CD4-positive, alpha-beta T cell (primary cell): ENCODE measurements at regions of chr10 and their contacts with region 1.

Region 1: GRCh38 chr10:106111246-106111645 is 1053.3 kb downstream of the SORCS1 start:
- DNase-seq: no peak
- ATAC-seq: no peak
- H3K4me3 ChIP-seq: no peak overlapping the region
- H3K4me3 Mint-ChIP-seq: no peak overlapping the region
- H3K27ac ChIP-seq: no peak overlapping the region
- H3K27ac Mint-ChIP-seq: no peak overlapping the region
- H3K4me1 ChIP-seq: no peaks in the 10 kb centered on the region
- H3K4me1 Mint-ChIP-seq: no peaks in the 10 kb centered on the region
- H3K27me3 ChIP-seq: no peaks in the 10 kb centered on the region
- H3K27me3 Mint-ChIP-seq: no peaks in the 10 kb centered on the region
- CTCF ChIP-seq: no peak

Region 2: DNA sequence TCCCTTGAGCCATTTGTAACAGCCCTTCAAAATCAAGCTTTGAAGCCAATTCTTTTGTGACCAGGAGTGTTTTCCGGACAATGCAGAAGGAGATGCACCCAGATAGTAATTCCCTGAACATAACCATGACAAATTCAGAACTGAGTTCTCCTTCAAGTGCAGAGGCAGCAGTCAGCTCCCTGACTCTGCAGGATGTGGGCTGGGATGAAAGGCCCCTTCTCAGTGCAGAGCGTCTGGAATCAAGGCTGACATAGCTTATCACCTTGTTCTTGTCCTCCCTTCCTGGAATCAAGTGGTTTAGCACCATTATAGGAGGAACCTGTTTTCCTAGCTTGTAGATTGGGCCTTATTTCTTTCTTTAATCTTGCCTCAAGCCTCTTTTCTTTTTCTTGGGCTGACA is 1326.8 kb before region 1 on chr10:
- CTCF ChIA-PET with region 1: no interaction called
- POLR2A ChIA-PET with region 1: no interaction called
- intact Hi-C with region 1: loop called in 1 of 2 experiments (anchors 10 kb)
- DNase-seq: no peak
- ATAC-seq: no peak
- H3K4me3 ChIP-seq: no peak overlapping the region
- H3K4me3 Mint-ChIP-seq: no peak overlapping the region
- H3K27ac ChIP-seq: no peak overlapping the region
- H3K27ac Mint-ChIP-seq: no peak overlapping the region
- H3K4me1 ChIP-seq: no peaks in the 10 kb centered on the region
- H3K4me1 Mint-ChIP-seq: no peaks in the 10 kb centered on the region
- H3K27me3 ChIP-seq: peaks cover 0 to 5% of the 10 kb centered on the region in 2 experiments
- H3K27me3 Mint-ChIP-seq: peaks cover 28% of the 10 kb centered on the region
- CTCF ChIP-seq: no peak